Activated T-helper 1 cell treated with anti-CD3 and anti-CD28 coated beads, Interleukin-12 subunit alpha, Interleukin-12 subunit beta, Interleukin-2, Interleukin-4 antibody, amounts not matched to agents 30 ng/mL and 10 ng/mL and 1 ng/mL, durations not matched to agents 14 hours and 24 hours and 36 hours (primary cell): ENCODE measurements at regions of chr16 and their contacts with region 1.

Region 1: GRCh38 chr16:87657621-87658192 is 55.4 kb downstream of the JPH3 start:
- DNase-seq: no peak
- H3K4me3 Mint-ChIP-seq: no peak overlapping the region
- H3K27ac Mint-ChIP-seq: no peak overlapping the region
- H3K4me1 Mint-ChIP-seq: no peaks in the 10 kb centered on the region
- H3K27me3 Mint-ChIP-seq: peaks cover 3% of the 10 kb centered on the region

Region 2: GRCh38 chr16:87613961-87614360 is 43.7 kb before region 1 on chr16:
- intact Hi-C with region 1: loop called (anchors 1 kb)
- DNase-seq: no peak
- H3K4me3 Mint-ChIP-seq: no peak overlapping the region
- H3K27ac Mint-ChIP-seq: no peak overlapping the region
- H3K4me1 Mint-ChIP-seq: no peaks in the 10 kb centered on the region
- H3K27me3 Mint-ChIP-seq: no peaks in the 10 kb centered on the region